Activated CD4-positive, alpha-beta memory T cell treated with anti-CD3 and anti-CD28 coated beads for 36 hours (primary cell): ENCODE measurements at regions of chr12 and their contacts with region 1.

Region 1: GRCh38 chr12:49031553-49032162 is 13.1 kb upstream of the PRKAG1 start:
- DNase-seq: no peak
- H3K4me3 Mint-ChIP-seq: no peak overlapping the region
- H3K27ac Mint-ChIP-seq: no peak overlapping the region
- H3K4me1 Mint-ChIP-seq: no peaks in the 10 kb centered on the region
- H3K27me3 Mint-ChIP-seq: no peaks in the 10 kb centered on the region

Region 2: GRCh38 chr12:48996794-48997718 is 34.6 kb before region 1 on chr12:
- CTCF ChIA-PET with region 1: no interaction called
- POLR2A ChIA-PET with region 1: no interaction called
- intact Hi-C with region 1: no loop called
- DNase-seq: peak; percentile 80
- H3K4me3 Mint-ChIP-seq: peak overlapping the region; percentile 51
- H3K27ac Mint-ChIP-seq: no peak overlapping the region
- H3K4me1 Mint-ChIP-seq: peaks cover 34% of the 10 kb centered on the region
- H3K27me3 Mint-ChIP-seq: peaks cover 42% of the 10 kb centered on the region

Region 3: DNA sequence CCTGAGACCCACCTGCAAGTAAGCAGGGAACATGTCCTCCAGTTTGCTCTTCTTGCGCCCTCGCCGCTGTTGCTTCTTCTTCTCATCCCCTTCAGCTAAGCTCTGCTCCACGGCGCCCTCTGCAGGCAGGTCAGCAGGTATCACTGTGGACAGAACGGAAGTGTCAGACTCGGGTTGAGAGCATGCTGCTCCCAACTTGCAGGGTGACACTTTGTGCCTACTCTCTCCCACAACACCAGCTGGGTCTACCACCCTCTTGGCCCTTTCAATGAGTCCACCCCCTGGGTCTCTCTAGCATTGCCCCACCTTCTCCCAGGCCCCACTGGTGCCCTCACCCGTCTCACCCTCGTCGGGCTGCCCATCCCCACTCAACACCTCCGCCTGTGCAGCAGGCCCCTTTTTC is 12.2 kb after region 1 on chr12:
- CTCF ChIA-PET with region 1: interaction called, 33 read pairs
- POLR2A ChIA-PET with region 1: interaction called, 3 read pairs
- intact Hi-C with region 1: no loop called
- DNase-seq: peak; percentile 84
- H3K4me3 Mint-ChIP-seq: no peak overlapping the region
- H3K27ac Mint-ChIP-seq: peak overlapping the region; percentile 51
- H3K4me1 Mint-ChIP-seq: peaks cover 2% of the 10 kb centered on the region
- H3K27me3 Mint-ChIP-seq: no peaks in the 10 kb centered on the region